A549 (cell line): ENCODE measurements at regions of chr1 and their contacts with region 1.

Region 1: GRCh38 chr1:109649491-109649914 is 6.4 kb upstream of the GSTM4 start:
- DNase-seq: peak in 1 of 2 experiments; percentile 46
- ATAC-seq: peak in 1 of 2 experiments; percentile 67; a peak in 3 of 6 replicates
- H3K4me3 ChIP-seq: 0 out of 3 replicates have a peak overlapping the region, but pooled peaks have one; percentile 21
- H3K27ac ChIP-seq: peak overlapping the region; percentile 57 to 63; a peak in 5 of 6 replicates
- H3K4me1 ChIP-seq: peaks cover 17% of the 10 kb centered on the region; the same call in 2 of the 3 replicates
- CTCF ChIP-seq: peak; percentile 55
- EP300 ChIP-seq: no peak
- POLR2A ChIP-seq: no peak
- RAD21 ChIP-seq: peak; percentile 48 to 50

Region 2: DNA sequence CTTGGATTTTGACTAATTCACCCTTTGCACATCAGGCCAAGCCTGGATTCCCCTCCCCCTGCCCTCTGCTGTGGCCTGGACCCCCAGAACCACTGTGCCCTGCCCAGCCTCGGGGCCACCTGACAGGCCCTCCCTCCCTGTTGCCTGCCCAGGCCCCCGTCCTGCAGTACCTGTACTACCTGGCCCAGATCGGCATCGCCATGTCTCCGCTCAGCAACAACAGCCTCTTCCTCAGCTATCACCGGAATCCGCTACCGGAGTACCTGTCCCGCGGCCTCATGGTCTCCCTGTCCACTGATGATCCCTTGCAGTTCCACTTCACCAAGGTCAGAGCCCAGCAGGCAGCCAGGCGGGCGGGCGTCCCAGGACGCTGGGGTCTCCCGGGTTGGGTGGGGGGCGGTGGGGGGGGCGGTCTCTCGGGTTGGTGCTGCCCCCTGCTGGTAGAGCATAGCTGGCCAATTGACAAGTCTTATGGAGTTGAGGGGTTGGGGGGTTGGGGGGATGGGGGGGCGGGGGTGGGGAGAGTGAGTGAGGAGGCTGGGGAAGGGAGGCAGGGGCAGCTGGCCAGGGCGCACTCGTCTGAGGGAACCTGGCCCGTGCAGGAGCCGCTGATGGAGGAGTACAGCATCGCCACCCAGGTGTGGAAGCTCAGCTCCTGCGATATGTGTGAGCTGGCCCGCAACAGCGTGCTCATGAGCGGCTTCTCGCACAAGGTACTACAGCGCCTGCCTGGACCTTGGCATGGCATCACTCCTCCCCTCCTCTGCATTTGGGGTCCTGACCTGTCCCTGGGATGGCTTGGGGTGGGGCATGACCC is 19.2 kb before region 1 on chr1:
- CTCF ChIA-PET with region 1: interaction called, 187 read pairs
- POLR2A ChIA-PET with region 1: no interaction called
- DNase-seq: no peak
- ATAC-seq: peak in 1 of 2 experiments; percentile 10; a peak in 2 of 6 replicates
- H3K4me3 ChIP-seq: no peak overlapping the region
- H3K27ac ChIP-seq: no peak overlapping the region
- H3K4me1 ChIP-seq: peaks cover 16% of the 10 kb centered on the region
- CTCF ChIP-seq: peak; percentile 31; the same call in 1 of the 3 replicates
- EP300 ChIP-seq: no peak
- POLR2A ChIP-seq: no peak
- RAD21 ChIP-seq: no peak; a peak in 2 of 5 replicates

Region 3: GRCh38 chr1:109661391-109661790 is 11.9 kb after region 1 on chr1:
- CTCF ChIA-PET with region 1: interaction called, 187 read pairs
- POLR2A ChIA-PET with region 1: no interaction called
- DNase-seq: no peak
- ATAC-seq: no peak
- H3K4me3 ChIP-seq: no peak overlapping the region
- H3K27ac ChIP-seq: no peak overlapping the region
- H3K4me1 ChIP-seq: peaks cover 4% of the 10 kb centered on the region; the same call in 1 of the 3 replicates
- CTCF ChIP-seq: no peak
- EP300 ChIP-seq: no peak
- POLR2A ChIP-seq: no peak
- RAD21 ChIP-seq: no peak